SK-N-SH (cell line): ENCODE measurements at regions of chrX and their contacts with region 1.

Region 1: GRCh38 chrX:103343105-103343504 is 13.1 kb downstream of the TCEAL7 start:
- DNase-seq: peak; percentile 44
- H3K4me3 ChIP-seq: no peak overlapping the region
- H3K27ac ChIP-seq: no peak overlapping the region
- H3K4me1 ChIP-seq: no peaks in the 10 kb centered on the region
- H3K27me3 ChIP-seq: 0 out of 2 replicates have a peak, but pooled peaks cover 6% of the 10 kb centered on the region
- CTCF ChIP-seq: peak; percentile 77
- EP300 ChIP-seq: no peak
- RAD21 ChIP-seq: peak; percentile 64

Region 2: DNA sequence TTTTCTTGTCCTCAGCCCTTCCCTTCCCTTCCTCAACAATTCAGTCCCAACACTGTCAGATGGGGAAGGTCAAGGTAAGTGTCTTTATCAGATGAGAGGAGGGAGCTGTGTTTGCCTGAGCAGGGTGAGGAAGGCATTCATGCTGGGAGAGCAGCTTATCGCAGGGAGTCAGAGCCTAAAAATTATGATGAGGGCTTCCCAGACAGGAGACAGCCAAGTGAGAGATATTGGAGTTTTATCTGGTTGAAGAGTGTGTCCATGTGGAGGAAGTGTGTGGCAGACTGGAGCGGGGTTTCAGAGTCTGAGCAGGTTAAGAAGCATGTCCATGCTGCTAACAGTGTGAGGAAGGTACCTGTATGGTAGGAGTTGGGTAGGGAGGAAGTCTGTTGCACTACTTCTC is 109.8 kb before region 1 on chrX:
- CTCF ChIA-PET with region 1: no interaction called
- POLR2A ChIA-PET with region 1: no interaction called
- DNase-seq: no peak
- H3K4me3 ChIP-seq: no peak overlapping the region
- H3K27ac ChIP-seq: no peak overlapping the region
- H3K4me1 ChIP-seq: no peaks in the 10 kb centered on the region
- H3K27me3 ChIP-seq: peaks cover 23% of the 10 kb centered on the region; the same call in 1 of the 2 replicates
- CTCF ChIP-seq: no peak
- EP300 ChIP-seq: no peak
- RAD21 ChIP-seq: no peak

Region 3: GRCh38 chrX:103464774-103465117 is 121.6 kb after region 1 on chrX:
- CTCF ChIA-PET with region 1: interaction called, 13 read pairs
- POLR2A ChIA-PET with region 1: no interaction called
- DNase-seq: peak; percentile 38
- H3K4me3 ChIP-seq: no peak overlapping the region; a peak in 1 of 4 replicates
- H3K27ac ChIP-seq: no peak overlapping the region; a peak in 1 of 4 replicates
- H3K4me1 ChIP-seq: peaks cover 0 to 4% of the 10 kb centered on the region in 2 experiments; a peak in 1 of 4 replicates
- H3K27me3 ChIP-seq: no peaks in the 10 kb centered on the region
- CTCF ChIP-seq: peak; percentile 78
- EP300 ChIP-seq: no peak
- RAD21 ChIP-seq: peak; percentile 82